Thyroid gland (tissue), 4 donors: ENCODE measurements at regions of chr10 and their contacts with region 1.

Region 1: GRCh38 chr10:121734589-121735045 is 136.4 kb upstream of the FGFR2 start:
- DNase-seq: peak; percentile 6 to 19
- H3K4me3 ChIP-seq: no peak overlapping the region
- H3K27ac ChIP-seq: no peak overlapping the region
- H3K4me1 ChIP-seq: no peaks in the 10 kb centered on the region
- H3K27me3 ChIP-seq: no peaks in the 10 kb centered on the region
- CTCF ChIP-seq: peak; percentile 34 to 73 (median 61)
- POLR2A ChIP-seq: no peak

Region 2: GRCh38 chr10:120942806-120943413 is 791.7 kb before region 1 on chr10:
- intact Hi-C with region 1: loop called (anchors 5 kb)
- DNase-seq: peak; percentile 72 to 79
- H3K4me3 ChIP-seq: no peak overlapping the region
- H3K27ac ChIP-seq: no peak overlapping the region
- H3K4me1 ChIP-seq: no peaks in the 10 kb centered on the region
- H3K27me3 ChIP-seq: no peaks in the 10 kb centered on the region
- CTCF ChIP-seq: peak; percentile 65 to 90 (median 84)
- POLR2A ChIP-seq: no peak

Region 3: GRCh38 chr10:121615435-121615793 is 119.2 kb before region 1 on chr10:
- intact Hi-C with region 1: loop called (anchors 10 kb)
- DNase-seq: no peak
- H3K4me3 ChIP-seq: no peak overlapping the region
- H3K27ac ChIP-seq: no peak overlapping the region
- H3K4me1 ChIP-seq: no peaks in the 10 kb centered on the region
- H3K27me3 ChIP-seq: no peaks in the 10 kb centered on the region
- CTCF ChIP-seq: no peak
- POLR2A ChIP-seq: no peak

Region 4: GRCh38 chr10:122102869-122103525 is 368.4 kb after region 1 on chr10:
- intact Hi-C with region 1: no loop called
- DNase-seq: no peak
- H3K4me3 ChIP-seq: no peak overlapping the region
- H3K27ac ChIP-seq: no peak overlapping the region
- H3K4me1 ChIP-seq: no peaks in the 10 kb centered on the region
- H3K27me3 ChIP-seq: no peaks in the 10 kb centered on the region
- CTCF ChIP-seq: no peak
- POLR2A ChIP-seq: no peak